ENCODE measurements at regions of chr20 and their contacts with region 1.

Region 1: GRCh38 chr20:17059465-17059864 is 167.4 kb upstream of the PCSK2 start:
- DNase-seq: no peak
- ATAC-seq: no peak
- H3K4me3 ChIP-seq: no peak overlapping the region
- H3K27ac ChIP-seq: no peak overlapping the region
- H3K4me1 ChIP-seq: no peaks in the 10 kb centered on the region
- H3K27me3 ChIP-seq: no peaks in the 10 kb centered on the region
- CTCF ChIP-seq: no peak
- EP300 ChIP-seq: no peak
- POLR2A ChIP-seq: no peak
- RAD21 ChIP-seq: no peak

Region 2: DNA sequence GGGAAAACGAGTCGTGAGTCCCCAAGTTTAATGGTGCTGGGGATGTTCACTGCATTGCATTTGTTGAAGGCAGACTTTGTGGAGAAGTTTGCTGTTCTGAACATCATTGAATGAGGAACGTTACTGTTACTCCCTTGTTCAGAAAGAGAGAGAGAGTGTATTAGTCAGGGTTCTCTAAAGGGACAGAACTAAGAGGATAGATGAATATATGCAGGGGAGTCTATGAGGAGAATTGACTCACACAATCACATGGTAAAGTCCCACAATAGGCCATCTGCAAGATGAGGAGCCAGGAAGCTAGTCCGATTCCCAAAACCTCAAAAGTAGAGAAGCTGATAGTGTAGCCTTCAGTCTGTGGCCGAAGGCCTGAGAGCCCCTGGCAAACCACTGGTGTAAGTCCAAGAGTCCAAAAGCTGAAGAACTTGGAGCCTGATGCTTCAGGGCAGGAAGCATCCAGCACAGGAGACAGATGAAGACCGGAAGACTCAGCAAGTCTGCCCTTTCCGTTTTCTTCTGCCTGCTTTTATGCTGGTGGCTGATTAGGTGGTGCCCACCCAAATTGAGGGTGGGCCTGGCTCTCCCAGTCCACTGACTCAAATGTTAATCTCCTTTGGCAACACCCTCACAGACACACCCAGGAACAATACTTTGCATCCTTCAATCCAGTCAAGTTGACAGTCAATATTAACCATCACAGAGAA is 56.1 kb before region 1 on chr20:
- CTCF ChIA-PET with region 1: no interaction called
- POLR2A ChIA-PET with region 1: no interaction called
- RAD21 ChIA-PET with region 1: no interaction called
- SMC1A ChIA-PET with region 1: no interaction called
- in situ Hi-C with region 1: loop called (anchors 10 kb)
- intact Hi-C with region 1: no loop called
- DNase-seq: no peak
- ATAC-seq: no peak
- H3K4me3 ChIP-seq: no peak overlapping the region
- H3K27ac ChIP-seq: no peak overlapping the region
- H3K4me1 ChIP-seq: no peaks in the 10 kb centered on the region
- H3K27me3 ChIP-seq: no peaks in the 10 kb centered on the region
- CTCF ChIP-seq: no peak
- EP300 ChIP-seq: no peak
- POLR2A ChIP-seq: no peak
- RAD21 ChIP-seq: no peak

Region 3: GRCh38 chr20:17093782-17094181 is 34.3 kb after region 1 on chr20:
- CTCF ChIA-PET with region 1: no interaction called
- POLR2A ChIA-PET with region 1: no interaction called
- RAD21 ChIA-PET with region 1: no interaction called
- SMC1A ChIA-PET with region 1: no interaction called
- in situ Hi-C with region 1: no loop called
- intact Hi-C with region 1: no loop called
- DNase-seq: no peak
- ATAC-seq: no peak
- H3K4me3 ChIP-seq: no peak overlapping the region
- H3K27ac ChIP-seq: no peak overlapping the region
- H3K4me1 ChIP-seq: no peaks in the 10 kb centered on the region
- H3K27me3 ChIP-seq: no peaks in the 10 kb centered on the region
- CTCF ChIP-seq: no peak
- EP300 ChIP-seq: no peak
- POLR2A ChIP-seq: no peak
- RAD21 ChIP-seq: no peak

Region 4: GRCh38 chr20:17226410-17227218 is 167.1 kb after region 1 on chr20 and contains the start of gene PCSK2:
- CTCF ChIA-PET with region 1: no interaction called
- POLR2A ChIA-PET with region 1: no interaction called
- RAD21 ChIA-PET with region 1: no interaction called
- SMC1A ChIA-PET with region 1: no interaction called
- in situ Hi-C with region 1: loop called (anchors 25 kb)
- intact Hi-C with region 1: no loop called
- DNase-seq: no peak
- ATAC-seq: peak; percentile 29
- H3K4me3 ChIP-seq: no peak within 1 kb of the TSS
- H3K27ac ChIP-seq: no peak within 1 kb of the TSS
- H3K4me1 ChIP-seq: no peaks in the 10 kb centered on the region
- H3K27me3 ChIP-seq: peaks cover 5 to 12% of the 10 kb centered on the region in 2 experiments; a peak in 2 of 4 replicates
- CTCF ChIP-seq: no peak
- EP300 ChIP-seq: no peak
- POLR2A ChIP-seq: no peak
- RAD21 ChIP-seq: no peak
- polyA plus RNA-seq, gene PCSK2: not detected